Heart right ventricle (tissue), 16 donors: ENCODE measurements at regions of chr12 and their contacts with region 1.

Region 1: GRCh38 chr12:109165599-109165998 is 49.2 kb downstream of the ACACB start:
- DNase-seq: no peak
- ATAC-seq: no peak
- H3K4me3 ChIP-seq: no peak overlapping the region
- H3K27ac ChIP-seq: peak overlapping the region in 1 of 10 donors; percentile 94
- H3K4me1 ChIP-seq: peaks cover 9 to 40% (median 34%) of the 10 kb centered on the region in 9 donors
- H3K27me3 ChIP-seq: no peaks in the 10 kb centered on the region
- CTCF ChIP-seq: no peak

Region 2: DNA sequence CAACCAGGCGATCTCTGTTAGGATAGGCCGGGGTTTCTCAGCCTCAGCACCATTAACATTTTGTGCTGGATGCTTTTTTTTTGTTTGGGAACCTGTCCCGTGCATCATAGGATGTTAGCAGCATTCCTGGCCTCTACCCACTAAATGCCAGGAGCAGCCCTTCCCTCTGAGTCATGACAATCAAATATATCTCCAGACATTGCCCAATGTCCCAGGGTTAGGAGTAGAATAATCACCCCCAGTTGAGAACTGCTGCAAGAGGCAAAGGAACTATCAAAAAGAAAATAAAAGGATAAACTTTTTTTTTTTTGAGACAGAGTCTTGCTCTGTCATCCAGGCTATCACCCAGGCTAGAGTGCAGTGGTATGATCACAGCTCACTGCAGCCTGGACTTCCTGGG is 26.8 kb after region 1 on chr12:
- intact Hi-C with region 1: no loop called
- DNase-seq: no peak
- ATAC-seq: peak in 3 of 8 donors; percentile 15 to 67 (median 34)
- H3K4me3 ChIP-seq: no peak overlapping the region
- H3K27ac ChIP-seq: peak overlapping the region in 2 of 10 donors; percentile 14 to 15
- H3K4me1 ChIP-seq: peaks cover 0 to 20% (median 0%) of the 10 kb centered on the region in 9 donors
- H3K27me3 ChIP-seq: no peaks in the 10 kb centered on the region
- CTCF ChIP-seq: no peak

Region 3: DNA sequence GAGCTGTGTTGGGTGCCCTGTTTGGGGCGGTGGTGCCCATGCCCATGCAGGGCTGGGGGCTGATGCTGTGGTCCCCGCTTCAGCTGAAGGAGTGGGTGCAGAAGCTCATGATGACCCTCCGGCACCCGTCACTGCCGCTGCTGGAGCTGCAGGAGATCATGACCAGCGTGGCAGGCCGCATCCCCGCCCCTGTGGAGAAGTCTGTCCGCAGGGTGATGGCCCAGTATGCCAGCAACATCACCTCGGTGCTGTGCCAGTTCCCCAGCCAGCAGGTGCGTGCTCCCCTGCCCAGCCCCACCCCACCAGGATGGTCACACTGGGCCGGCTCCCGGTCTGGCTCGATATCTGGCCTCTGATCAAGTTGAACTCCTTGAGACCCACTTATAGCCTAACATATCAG is 43.5 kb after region 1 on chr12:
- intact Hi-C with region 1: loop called in 1 of 10 experiments (anchors 5 kb)
- DNase-seq: no peak
- ATAC-seq: peak in 2 of 8 donors; percentile 16 to 53
- H3K4me3 ChIP-seq: no peak overlapping the region
- H3K27ac ChIP-seq: no peak overlapping the region
- H3K4me1 ChIP-seq: no peaks in the 10 kb centered on the region
- H3K27me3 ChIP-seq: no peaks in the 10 kb centered on the region
- CTCF ChIP-seq: no peak

Region 4: DNA sequence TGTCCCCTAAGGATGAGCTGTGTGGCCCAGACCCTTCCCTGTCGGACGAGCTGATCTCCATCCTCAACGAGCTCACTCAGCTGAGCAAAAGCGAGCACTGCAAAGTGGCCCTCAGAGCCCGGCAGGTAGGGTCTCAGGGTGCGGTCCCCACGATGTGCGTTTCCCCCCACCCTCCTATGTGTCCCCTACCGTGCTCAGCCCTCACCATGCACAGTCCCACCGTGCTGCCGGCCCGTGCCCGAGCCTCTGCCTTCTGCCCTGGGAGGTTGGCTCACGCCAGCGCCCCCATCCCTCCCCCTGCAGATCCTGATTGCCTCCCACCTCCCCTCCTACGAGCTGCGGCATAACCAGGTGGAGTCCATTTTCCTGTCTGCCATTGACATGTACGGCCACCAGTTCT is 56.9 kb after region 1 on chr12:
- intact Hi-C with region 1: loop called in 1 of 10 experiments (anchors 10 kb)
- DNase-seq: no peak
- ATAC-seq: peak in 4 of 8 donors; percentile 3 to 29 (median 20)
- H3K4me3 ChIP-seq: no peak overlapping the region
- H3K27ac ChIP-seq: no peak overlapping the region
- H3K4me1 ChIP-seq: peaks cover 0 to 15% (median 0%) of the 10 kb centered on the region in 9 donors
- H3K27me3 ChIP-seq: no peaks in the 10 kb centered on the region
- CTCF ChIP-seq: no peak

Region 5: GRCh38 chr12:109239179-109239578 is 73.6 kb after region 1 on chr12:
- intact Hi-C with region 1: loop called in 1 of 10 experiments (anchors 10 kb)
- DNase-seq: no peak
- ATAC-seq: no peak
- H3K4me3 ChIP-seq: no peak overlapping the region
- H3K27ac ChIP-seq: no peak overlapping the region
- H3K4me1 ChIP-seq: no peaks in the 10 kb centered on the region
- H3K27me3 ChIP-seq: no peaks in the 10 kb centered on the region
- CTCF ChIP-seq: no peak

Region 6: DNA sequence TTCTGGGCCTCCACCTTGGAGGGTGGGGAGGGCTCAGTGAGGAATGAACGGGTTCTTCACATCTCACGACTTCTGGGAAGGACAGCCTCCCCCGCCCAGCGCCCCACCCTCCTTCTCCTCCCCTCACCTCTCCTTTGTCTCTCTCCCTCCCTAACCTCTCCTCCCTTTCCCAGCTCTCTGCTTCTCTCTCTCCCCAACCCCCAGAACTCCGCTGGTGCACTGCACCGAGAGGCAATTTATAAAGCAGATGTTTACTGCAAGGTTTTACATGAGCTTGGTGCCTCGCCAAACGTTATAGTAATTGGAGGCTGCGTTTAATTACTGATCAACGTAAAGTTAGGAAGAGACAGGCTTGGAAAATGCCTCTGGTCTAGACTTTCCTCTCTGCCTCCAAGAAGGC is 505.1 kb after region 1 on chr12:
- intact Hi-C with region 1: no loop called
- DNase-seq: no peak
- ATAC-seq: no peak
- H3K4me3 ChIP-seq: no peak overlapping the region
- H3K27ac ChIP-seq: no peak overlapping the region
- H3K4me1 ChIP-seq: no peaks in the 10 kb centered on the region
- H3K27me3 ChIP-seq: peaks cover 0 to 31% (median 18%) of the 10 kb centered on the region in 7 donors
- CTCF ChIP-seq: no peak

Region 7: DNA sequence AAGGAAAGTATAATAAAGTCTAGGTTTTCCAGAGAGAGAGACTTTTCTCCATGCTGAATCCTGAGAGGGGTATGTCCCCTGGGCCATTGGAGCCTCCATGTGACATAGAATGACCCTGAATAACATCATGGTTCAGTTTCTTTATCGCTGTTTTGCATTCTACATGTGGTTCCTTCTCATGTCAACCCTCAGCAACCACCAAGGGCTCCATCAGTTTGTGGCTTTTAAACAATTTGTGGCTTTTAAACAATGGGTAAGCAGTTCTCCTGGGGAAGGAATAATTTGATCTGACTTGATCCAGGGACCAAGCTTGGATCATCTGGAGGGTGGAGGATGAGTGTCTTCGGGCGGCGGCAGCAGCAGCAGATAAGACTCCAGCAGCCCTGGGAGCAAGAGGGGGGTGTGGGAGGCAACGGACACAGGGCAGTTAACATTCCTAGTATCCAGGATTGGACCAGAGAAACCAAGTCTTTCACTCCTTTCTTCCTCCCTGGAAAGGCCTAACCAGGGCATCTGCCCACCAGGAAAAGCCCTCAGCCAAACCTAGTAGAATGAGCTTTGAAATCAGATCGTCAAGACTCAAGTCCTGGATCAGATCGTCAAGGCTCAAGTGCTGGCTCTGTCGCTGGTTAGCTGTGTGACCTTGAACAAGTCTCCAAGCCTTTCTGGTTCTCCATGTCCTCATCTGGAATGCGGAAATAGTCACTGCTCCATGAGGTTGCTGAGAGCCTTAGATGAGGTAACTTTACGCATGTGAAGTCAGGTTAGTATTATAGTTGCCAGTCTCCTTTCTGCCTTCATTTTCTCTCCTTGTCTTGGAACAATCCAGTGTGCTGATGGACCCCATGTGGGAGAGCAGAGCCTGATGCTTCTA is 520.2 kb after region 1 on chr12:
- intact Hi-C with region 1: no loop called
- DNase-seq: no peak
- ATAC-seq: no peak
- H3K4me3 ChIP-seq: no peak overlapping the region
- H3K27ac ChIP-seq: no peak overlapping the region
- H3K4me1 ChIP-seq: peaks cover 0 to under 1% (median 0%) of the 10 kb centered on the region in 9 donors
- H3K27me3 ChIP-seq: no peaks in the 10 kb centered on the region
- CTCF ChIP-seq: no peak